Heart right ventricle (tissue), 16 donors: ENCODE measurements at regions of chr19 and their contacts with region 1.

Region 1: GRCh38 chr19:4791170-4792018 is at the start of gene FEM1A:
- DNase-seq: peak; percentile 97 to 100
- ATAC-seq: peak; percentile 97 to 100 (median 99)
- H3K4me3 ChIP-seq: peak within 1 kb of the TSS; percentile 77 to 99 (median 92)
- H3K27ac ChIP-seq: peak within 1 kb of the TSS; percentile 86 to 99 (median 96)
- H3K4me1 ChIP-seq: peaks cover 11 to 51% (median 39%) of the 10 kb centered on the region in 9 donors
- H3K27me3 ChIP-seq: no peaks in the 10 kb centered on the region
- CTCF ChIP-seq: peak; percentile 93 to 100 (median 99)
- total RNA-seq, gene FEM1A: 36.5 to 51.6 (median 48.1) TPM

Region 2: GRCh38 chr19:4576016-4576933 is 215.1 kb before region 1 on chr19:
- intact Hi-C with region 1: loop called in 1 of 10 experiments (anchors 10 kb)
- DNase-seq: peak; percentile 67 to 80
- ATAC-seq: peak; percentile 39 to 73 (median 56)
- H3K4me3 ChIP-seq: no peak overlapping the region
- H3K27ac ChIP-seq: peak overlapping the region; percentile 51 to 90 (median 84)
- H3K4me1 ChIP-seq: peaks cover 0 to 42% (median 26%) of the 10 kb centered on the region in 9 donors
- H3K27me3 ChIP-seq: peaks cover 5 to 68% (median 41%) of the 10 kb centered on the region in 7 donors
- CTCF ChIP-seq: peak; percentile 27 to 76 (median 70)

Region 3: DNA sequence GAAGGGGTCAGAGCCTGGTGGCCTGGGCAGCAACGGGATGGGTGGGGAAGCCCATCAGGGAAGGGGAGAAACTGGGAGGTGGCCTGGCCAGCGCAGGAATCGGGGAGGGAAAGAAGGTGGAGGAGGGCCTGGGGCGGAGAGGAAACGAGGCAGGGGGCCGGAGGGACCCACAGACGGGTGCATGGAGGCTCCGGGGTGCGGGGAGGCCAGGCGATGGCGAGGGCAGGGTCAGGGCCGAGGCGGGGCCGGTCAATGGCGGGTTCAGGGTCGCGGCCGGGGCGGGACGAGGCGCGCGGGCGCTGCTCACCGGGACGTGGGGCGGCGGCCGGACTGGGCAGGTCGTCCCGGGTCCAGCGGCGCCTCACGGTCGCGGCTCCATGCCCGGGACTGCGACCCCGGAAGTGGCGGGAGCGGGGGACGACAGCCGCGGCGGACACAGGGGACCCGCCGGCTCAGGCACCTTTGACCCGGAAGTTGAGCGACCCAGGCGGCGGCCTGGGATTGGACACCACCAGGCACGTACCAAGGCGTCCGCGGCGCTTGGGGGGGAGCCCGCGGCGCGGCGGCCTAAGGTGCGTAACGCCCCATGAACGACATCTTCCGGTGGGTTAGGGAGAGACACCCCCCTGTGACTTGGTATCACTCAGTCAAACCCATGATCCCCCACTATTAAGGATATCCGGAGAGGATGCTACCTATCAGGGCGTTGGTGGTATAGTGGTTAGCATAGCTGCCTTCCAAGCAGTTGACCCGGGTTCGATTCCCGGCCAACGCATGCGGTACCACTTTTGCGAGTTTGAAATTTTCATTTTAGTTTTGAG is 67.8 kb before region 1 on chr19 and contains the start of gene DPP9:
- intact Hi-C with region 1: loop called in 3 of 10 experiments (anchors 2 kb)
- DNase-seq: peak; percentile 96 to 97
- ATAC-seq: peak; percentile 95 to 97 (median 96)
- H3K4me3 ChIP-seq: peak within 1 kb of the TSS; percentile 76 to 97 (median 91)
- H3K27ac ChIP-seq: peak within 1 kb of the TSS; percentile 89 to 97 (median 94)
- H3K4me1 ChIP-seq: peaks cover 10 to 34% (median 24%) of the 10 kb centered on the region in 9 donors
- H3K27me3 ChIP-seq: no peaks in the 10 kb centered on the region
- CTCF ChIP-seq: peak in 6 of 9 donors; percentile 33 to 54 (median 46)
- total RNA-seq, gene DPP9: 34.2 to 52.2 (median 45.0) TPM

Region 4: DNA sequence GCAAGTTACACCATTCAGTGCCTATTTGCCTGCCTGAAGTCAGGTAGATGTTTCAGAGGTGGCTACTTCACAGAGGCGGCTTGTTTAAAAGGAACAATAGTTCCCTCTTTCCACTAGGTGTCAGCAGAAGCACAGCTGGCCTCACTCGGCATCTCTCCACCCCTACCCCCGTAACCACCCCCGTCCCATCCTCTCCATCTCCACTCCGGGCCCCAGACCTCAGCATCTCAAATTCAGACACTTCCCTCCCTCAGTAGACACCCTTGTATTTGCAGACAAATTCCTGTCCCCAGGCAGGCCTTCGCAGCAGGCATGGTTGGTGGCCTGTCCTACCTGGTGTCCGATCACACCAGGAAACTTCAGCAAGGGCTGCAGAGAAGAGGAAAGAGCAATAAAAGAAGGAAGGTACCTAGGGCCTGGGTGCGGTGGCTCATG is 58.7 kb before region 1 on chr19:
- intact Hi-C with region 1: loop called in 8 of 10 experiments (anchors 1 to 10 kb)
- DNase-seq: peak in 1 of 2 donors; percentile 44
- ATAC-seq: peak; percentile 72 to 91 (median 86)
- H3K4me3 ChIP-seq: no peak overlapping the region
- H3K27ac ChIP-seq: no peak overlapping the region
- H3K4me1 ChIP-seq: peaks cover 0 to 8% (median 2%) of the 10 kb centered on the region in 9 donors
- H3K27me3 ChIP-seq: peaks cover 0 to 9% (median 0%) of the 10 kb centered on the region in 7 donors
- CTCF ChIP-seq: peak; percentile 51 to 83 (median 76)

Region 5: DNA sequence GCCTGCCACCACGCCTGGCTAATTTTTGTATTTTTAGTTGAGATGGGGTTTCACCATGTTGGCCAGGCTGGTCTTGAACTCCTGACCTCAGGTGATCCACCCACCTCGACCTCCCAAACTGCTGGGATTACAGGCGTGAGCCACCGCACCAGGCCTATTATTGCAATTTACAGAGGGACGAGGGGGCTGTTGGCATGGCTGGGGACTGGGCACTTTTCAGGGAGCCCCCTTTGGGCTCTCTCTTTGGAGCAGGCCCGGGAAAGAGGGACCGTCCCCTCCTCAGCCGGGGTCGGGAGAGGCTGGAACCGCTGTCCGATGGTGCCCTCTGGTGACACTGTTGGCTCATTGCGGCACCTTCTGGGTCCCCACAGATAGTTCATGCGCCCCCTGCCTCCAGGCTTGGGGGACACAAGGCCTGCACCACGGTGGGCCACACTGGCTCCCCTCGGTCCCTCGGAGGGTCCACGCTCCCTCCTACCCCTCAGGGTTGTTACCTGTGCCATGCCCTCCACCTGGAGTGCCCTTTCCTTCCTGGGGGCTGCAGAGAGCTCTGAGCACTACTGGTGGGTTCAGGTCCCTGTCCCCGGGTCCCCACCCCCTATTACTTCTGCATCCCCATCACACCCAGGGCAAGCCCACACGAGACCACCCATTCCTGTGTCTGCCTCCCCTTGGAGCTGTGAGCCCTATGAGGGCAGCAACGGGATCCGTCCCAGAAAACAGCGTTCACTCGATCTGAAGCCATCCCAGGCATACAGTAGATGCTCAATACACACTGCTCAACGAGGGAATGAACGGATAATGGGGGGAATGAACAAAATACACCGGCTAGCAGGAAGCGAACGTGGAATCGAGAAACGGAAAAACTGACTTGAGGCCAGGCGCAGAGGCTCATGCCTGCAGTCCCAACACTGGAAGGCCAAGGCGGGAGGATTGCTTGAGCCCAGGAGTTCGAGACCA is 12.6 kb after region 1 on chr19:
- intact Hi-C with region 1: loop called in 1 of 10 experiments (anchors 1 kb)
- DNase-seq: peak; percentile 55 to 69
- ATAC-seq: peak; percentile 50 to 78 (median 63)
- H3K4me3 ChIP-seq: no peak overlapping the region
- H3K27ac ChIP-seq: peak overlapping the region in 1 of 10 donors; percentile 80
- H3K4me1 ChIP-seq: peaks cover 0 to 34% (median 18%) of the 10 kb centered on the region in 9 donors
- H3K27me3 ChIP-seq: no peaks in the 10 kb centered on the region
- CTCF ChIP-seq: peak; percentile 61 to 89 (median 79)